CD8-positive, alpha-beta T cell (primary cell): ENCODE measurements at regions of chr17 and their contacts with region 1.

Region 1: GRCh38 chr17:58587702-58588254 is 73.3 kb upstream of the MTMR4 start:
- DNase-seq: peak; percentile 30 to 78 (median 58)
- ATAC-seq: peak; percentile 92
- H3K4me3 ChIP-seq: no peak overlapping the region
- H3K4me3 Mint-ChIP-seq: no peak overlapping the region
- H3K27ac ChIP-seq: no peak overlapping the region
- H3K27ac Mint-ChIP-seq: no peak overlapping the region
- H3K4me1 ChIP-seq: no peaks in the 10 kb centered on the region
- H3K4me1 Mint-ChIP-seq: no peaks in the 10 kb centered on the region
- H3K27me3 ChIP-seq: no peaks in the 10 kb centered on the region
- H3K27me3 Mint-ChIP-seq: no peaks in the 10 kb centered on the region
- CTCF ChIP-seq: peak; percentile 96

Region 2: DNA sequence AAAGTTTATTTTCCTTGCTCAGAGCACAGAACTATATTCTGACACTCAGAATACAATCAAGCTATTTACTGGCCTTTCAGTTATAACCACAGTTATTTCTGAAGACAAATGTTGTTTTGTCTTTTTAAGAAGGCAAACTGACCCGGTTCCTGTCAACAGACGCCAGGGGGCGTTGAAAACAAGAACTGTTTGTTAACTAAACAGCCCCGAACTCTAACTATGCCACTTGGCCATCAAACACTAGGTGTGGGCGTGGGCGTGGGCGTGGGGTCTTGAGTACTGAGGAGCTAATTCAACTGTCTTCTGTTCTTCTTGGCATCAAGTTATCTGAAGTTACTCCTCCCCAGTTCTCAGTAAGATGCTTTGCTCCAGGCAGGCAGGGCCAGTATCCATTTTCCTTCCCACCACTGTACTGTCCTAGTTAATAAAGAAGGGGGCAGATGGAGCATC is 10.1 kb before region 1 on chr17:
- CTCF ChIA-PET with region 1: interaction called, 22 read pairs
- POLR2A ChIA-PET with region 1: interaction called, 3 read pairs
- intact Hi-C with region 1: no loop called
- DNase-seq: peak in 8 of 9 experiments; percentile 11 to 68 (median 52)
- ATAC-seq: peak; percentile 55
- H3K4me3 ChIP-seq: no peak overlapping the region
- H3K4me3 Mint-ChIP-seq: no peak overlapping the region
- H3K27ac ChIP-seq: no peak overlapping the region
- H3K27ac Mint-ChIP-seq: no peak overlapping the region
- H3K4me1 ChIP-seq: no peaks in the 10 kb centered on the region
- H3K4me1 Mint-ChIP-seq: peaks cover 3% of the 10 kb centered on the region
- H3K27me3 ChIP-seq: no peaks in the 10 kb centered on the region
- H3K27me3 Mint-ChIP-seq: peaks cover 2% of the 10 kb centered on the region
- CTCF ChIP-seq: peak; percentile 65

Region 3: DNA sequence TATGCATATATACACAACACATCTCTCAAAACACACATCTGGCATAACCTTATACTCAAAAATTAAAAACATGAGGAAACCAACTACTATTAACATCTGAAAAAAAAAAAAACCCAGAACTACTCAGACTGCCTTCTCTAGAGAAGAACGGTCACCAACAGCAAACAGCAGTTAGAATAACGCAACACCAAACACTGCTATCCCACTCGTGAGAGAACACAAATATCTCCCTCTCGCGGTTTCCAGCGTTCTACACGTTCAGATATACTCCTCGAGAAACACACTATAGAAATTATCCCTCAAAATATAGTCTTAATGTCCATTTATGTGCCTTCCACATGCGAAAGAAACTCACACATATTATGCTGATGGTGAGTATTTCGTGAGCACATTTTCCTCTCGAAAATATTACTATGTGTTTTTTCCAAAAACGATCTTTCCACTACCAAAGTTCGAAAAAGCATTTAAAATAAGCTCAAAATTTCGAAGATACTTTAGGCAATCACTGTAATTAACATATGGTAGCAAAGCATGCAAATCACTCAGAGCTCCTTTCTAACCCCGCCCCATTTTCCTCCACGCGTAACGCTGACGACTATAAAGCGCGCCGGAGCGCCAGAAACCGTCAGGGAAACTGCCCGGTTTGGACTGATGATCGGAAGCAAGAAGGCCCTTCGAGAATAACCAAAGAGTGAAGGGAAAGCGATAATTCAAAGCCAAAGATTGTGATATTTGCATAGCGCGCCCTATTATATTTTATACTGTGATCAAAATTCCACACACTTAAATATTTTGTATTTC is 43.9 kb after region 1 on chr17:
- CTCF ChIA-PET with region 1: interaction called, 5 read pairs
- POLR2A ChIA-PET with region 1: interaction called, 3 read pairs
- intact Hi-C with region 1: loop called (anchors 1 kb)
- DNase-seq: peak; percentile 84 to 97 (median 91)
- ATAC-seq: peak; percentile 88
- H3K4me3 ChIP-seq: peak overlapping the region; percentile 48 to 50
- H3K4me3 Mint-ChIP-seq: no peak overlapping the region
- H3K27ac ChIP-seq: peak overlapping the region; percentile 95 to 97
- H3K27ac Mint-ChIP-seq: no peak overlapping the region
- H3K4me1 ChIP-seq: peaks cover 13% of the 10 kb centered on the region
- H3K4me1 Mint-ChIP-seq: peaks cover 2% of the 10 kb centered on the region
- H3K27me3 ChIP-seq: no peaks in the 10 kb centered on the region
- H3K27me3 Mint-ChIP-seq: no peaks in the 10 kb centered on the region
- CTCF ChIP-seq: no peak

Region 4: DNA sequence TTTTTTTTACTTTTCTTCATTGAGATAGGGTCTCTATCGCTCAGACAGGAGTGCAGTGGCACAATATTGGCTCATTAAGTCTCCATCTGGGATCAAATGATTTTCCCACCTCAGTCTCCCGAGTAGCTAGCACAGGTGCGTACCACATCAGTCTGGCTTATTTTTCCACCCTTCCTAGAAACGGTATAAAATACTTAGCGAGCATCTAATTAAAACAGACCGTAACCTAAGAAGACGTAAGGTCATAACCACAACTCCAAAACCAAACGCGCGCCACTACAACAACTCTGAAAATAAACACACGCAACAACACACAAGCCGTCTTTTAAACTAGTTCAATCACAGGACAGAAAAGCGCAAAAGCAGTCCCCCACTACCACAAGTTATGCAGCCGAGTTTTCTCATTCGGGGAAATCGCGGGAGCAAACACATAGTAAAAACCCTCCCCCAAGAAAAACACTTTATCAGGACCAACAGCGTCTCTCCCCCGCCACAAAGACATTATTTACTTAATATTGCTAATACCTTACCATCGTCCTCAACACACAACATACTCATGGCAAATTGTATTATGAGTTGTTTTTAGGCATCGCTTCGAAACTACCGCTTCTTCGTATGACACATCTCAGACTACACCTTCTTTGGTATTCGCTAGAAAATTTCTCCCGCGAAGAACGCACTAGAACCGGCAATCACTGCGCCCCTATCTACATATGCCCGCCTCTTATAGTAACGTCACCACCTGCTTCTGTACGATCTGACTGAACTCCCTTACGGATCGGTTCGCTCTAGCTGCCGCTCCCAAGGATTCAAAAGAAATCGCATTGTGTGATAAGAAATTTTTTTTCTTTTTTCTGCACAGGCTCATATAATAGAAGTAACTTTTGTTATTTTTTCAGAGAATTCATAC is 71.3 kb after region 1 on chr17:
- CTCF ChIA-PET with region 1: no interaction called
- POLR2A ChIA-PET with region 1: no interaction called
- intact Hi-C with region 1: loop called (anchors 1 to 2 kb)
- DNase-seq: peak; percentile 56 to 95 (median 80)
- ATAC-seq: peak; percentile 83
- H3K4me3 ChIP-seq: peak overlapping the region; percentile 40 to 41
- H3K4me3 Mint-ChIP-seq: peak overlapping the region; percentile 77
- H3K27ac ChIP-seq: peak overlapping the region; percentile 91 to 96
- H3K27ac Mint-ChIP-seq: peak overlapping the region; percentile 100
- H3K4me1 ChIP-seq: no peaks in the 10 kb centered on the region
- H3K4me1 Mint-ChIP-seq: peaks cover 17% of the 10 kb centered on the region
- H3K27me3 ChIP-seq: no peaks in the 10 kb centered on the region
- H3K27me3 Mint-ChIP-seq: no peaks in the 10 kb centered on the region
- CTCF ChIP-seq: no peak

Region 5: GRCh38 chr17:58692239-58693055 is 104.7 kb after region 1 on chr17 and contains the start of gene RAD51C:
- CTCF ChIA-PET with region 1: interaction called, 5 read pairs
- POLR2A ChIA-PET with region 1: no interaction called
- intact Hi-C with region 1: loop called in 1 of 2 experiments (anchors 1 kb)
- DNase-seq: peak; percentile 67 to 93 (median 85)
- ATAC-seq: peak; percentile 98
- H3K4me3 ChIP-seq: peak within 1 kb of the TSS; percentile 72 to 86
- H3K4me3 Mint-ChIP-seq: peak within 1 kb of the TSS; percentile 91
- H3K27ac ChIP-seq: peak within 1 kb of the TSS; percentile 66 to 82
- H3K27ac Mint-ChIP-seq: peak within 1 kb of the TSS; percentile 89
- H3K4me1 ChIP-seq: peaks cover 17% of the 10 kb centered on the region
- H3K4me1 Mint-ChIP-seq: peaks cover 29% of the 10 kb centered on the region
- H3K27me3 ChIP-seq: no peaks in the 10 kb centered on the region
- H3K27me3 Mint-ChIP-seq: no peaks in the 10 kb centered on the region
- CTCF ChIP-seq: no peak
- total RNA-seq, gene RAD51C: 10.0 to 10.7 TPM

Region 6: GRCh38 chr17:59004338-59005111 is 416.7 kb after region 1 on chr17:
- CTCF ChIA-PET with region 1: interaction called, 36 read pairs
- POLR2A ChIA-PET with region 1: interaction called, 4 read pairs
- intact Hi-C with region 1: loop called (anchors 1 kb)
- DNase-seq: peak; percentile 52 to 82 (median 74)
- ATAC-seq: peak; percentile 54
- H3K4me3 ChIP-seq: no peak overlapping the region
- H3K4me3 Mint-ChIP-seq: no peak overlapping the region
- H3K27ac ChIP-seq: peak overlapping the region in 1 of 2 experiments; percentile 40
- H3K27ac Mint-ChIP-seq: peak overlapping the region; percentile 60
- H3K4me1 ChIP-seq: peaks cover 15% of the 10 kb centered on the region
- H3K4me1 Mint-ChIP-seq: peaks cover 13% of the 10 kb centered on the region
- H3K27me3 ChIP-seq: no peaks in the 10 kb centered on the region
- H3K27me3 Mint-ChIP-seq: no peaks in the 10 kb centered on the region
- CTCF ChIP-seq: peak; percentile 98

Region 7: DNA sequence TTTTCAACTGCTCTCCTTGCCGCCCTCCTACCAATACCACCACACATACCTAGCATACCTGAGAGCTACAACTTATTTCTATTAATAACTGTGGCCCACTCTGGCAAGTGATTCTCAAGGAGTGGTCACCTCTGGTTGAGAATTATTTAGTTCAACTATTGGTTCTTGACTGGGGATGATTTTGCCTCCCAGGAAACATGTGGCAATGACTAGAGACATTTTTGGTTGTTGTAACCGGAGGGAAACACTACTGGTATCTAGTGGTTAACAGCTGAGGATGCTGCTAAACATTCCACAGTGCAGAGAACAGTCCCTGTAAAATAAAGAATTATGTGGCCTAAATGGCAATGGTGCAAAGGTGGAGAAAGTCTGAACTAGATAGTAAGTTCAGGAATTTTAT is 422.2 kb after region 1 on chr17:
- CTCF ChIA-PET with region 1: interaction called, 36 read pairs
- POLR2A ChIA-PET with region 1: interaction called, 4 read pairs
- intact Hi-C with region 1: loop called (anchors 1 kb)
- DNase-seq: no peak
- ATAC-seq: no peak
- H3K4me3 ChIP-seq: no peak overlapping the region
- H3K4me3 Mint-ChIP-seq: no peak overlapping the region
- H3K27ac ChIP-seq: no peak overlapping the region
- H3K27ac Mint-ChIP-seq: no peak overlapping the region
- H3K4me1 ChIP-seq: no peaks in the 10 kb centered on the region
- H3K4me1 Mint-ChIP-seq: no peaks in the 10 kb centered on the region
- H3K27me3 ChIP-seq: no peaks in the 10 kb centered on the region
- H3K27me3 Mint-ChIP-seq: no peaks in the 10 kb centered on the region
- CTCF ChIP-seq: no peak